Heart right ventricle (tissue), 16 donors: ENCODE measurements at regions of chr3 and their contacts with region 1.

Region 1: DNA sequence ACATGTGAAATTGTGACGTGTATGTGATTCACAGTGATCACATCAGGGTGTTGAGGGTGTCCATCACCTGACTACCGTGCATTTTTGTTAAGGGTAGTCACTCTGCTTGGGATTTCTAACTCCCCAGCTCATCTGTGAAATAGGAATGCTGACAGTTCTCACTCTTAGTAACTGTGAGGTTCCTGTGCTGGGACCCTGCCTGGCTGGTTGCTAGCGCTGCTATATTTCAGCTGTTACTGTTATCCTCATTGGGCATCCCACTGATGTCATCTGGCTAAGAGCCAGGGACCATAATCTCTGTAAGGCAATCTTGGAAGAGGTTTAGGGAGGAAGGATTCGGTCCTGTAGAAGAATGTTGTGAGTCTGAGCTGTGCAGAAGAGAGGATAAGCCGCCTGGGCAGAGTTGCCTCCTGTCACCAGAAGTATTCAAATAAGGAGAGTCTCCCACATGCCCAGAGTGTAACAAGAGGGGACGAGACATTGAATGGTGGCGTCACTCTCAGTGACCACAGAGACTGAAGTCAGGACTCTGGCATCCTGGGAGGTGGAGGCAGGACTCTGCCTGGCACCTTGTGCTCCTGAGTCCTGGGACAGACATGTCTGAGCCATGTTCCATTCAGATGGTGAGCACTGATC is 52.1 kb downstream of the FBLN2 start:
- DNase-seq: no peak
- ATAC-seq: peak in 4 of 8 donors; percentile 18 to 37 (median 31)
- H3K4me3 ChIP-seq: no peak overlapping the region
- H3K27ac ChIP-seq: no peak overlapping the region
- H3K4me1 ChIP-seq: peaks cover 0 to 27% (median 3%) of the 10 kb centered on the region in 9 donors
- H3K27me3 ChIP-seq: peaks cover 0 to 14% (median 0%) of the 10 kb centered on the region in 7 donors
- CTCF ChIP-seq: no peak

Region 2: GRCh38 chr3:13559764-13560525 is 41.1 kb before region 1 on chr3:
- intact Hi-C with region 1: loop called in 1 of 10 experiments (anchors 5 kb)
- DNase-seq: peak in 1 of 2 donors; percentile 50
- ATAC-seq: peak; percentile 58 to 81 (median 73)
- H3K4me3 ChIP-seq: no peak overlapping the region
- H3K27ac ChIP-seq: peak overlapping the region in 7 of 10 donors; percentile 30 to 78 (median 69)
- H3K4me1 ChIP-seq: peaks cover 1 to 83% (median 23%) of the 10 kb centered on the region in 9 donors
- H3K27me3 ChIP-seq: no peaks in the 10 kb centered on the region
- CTCF ChIP-seq: no peak

Region 3: DNA sequence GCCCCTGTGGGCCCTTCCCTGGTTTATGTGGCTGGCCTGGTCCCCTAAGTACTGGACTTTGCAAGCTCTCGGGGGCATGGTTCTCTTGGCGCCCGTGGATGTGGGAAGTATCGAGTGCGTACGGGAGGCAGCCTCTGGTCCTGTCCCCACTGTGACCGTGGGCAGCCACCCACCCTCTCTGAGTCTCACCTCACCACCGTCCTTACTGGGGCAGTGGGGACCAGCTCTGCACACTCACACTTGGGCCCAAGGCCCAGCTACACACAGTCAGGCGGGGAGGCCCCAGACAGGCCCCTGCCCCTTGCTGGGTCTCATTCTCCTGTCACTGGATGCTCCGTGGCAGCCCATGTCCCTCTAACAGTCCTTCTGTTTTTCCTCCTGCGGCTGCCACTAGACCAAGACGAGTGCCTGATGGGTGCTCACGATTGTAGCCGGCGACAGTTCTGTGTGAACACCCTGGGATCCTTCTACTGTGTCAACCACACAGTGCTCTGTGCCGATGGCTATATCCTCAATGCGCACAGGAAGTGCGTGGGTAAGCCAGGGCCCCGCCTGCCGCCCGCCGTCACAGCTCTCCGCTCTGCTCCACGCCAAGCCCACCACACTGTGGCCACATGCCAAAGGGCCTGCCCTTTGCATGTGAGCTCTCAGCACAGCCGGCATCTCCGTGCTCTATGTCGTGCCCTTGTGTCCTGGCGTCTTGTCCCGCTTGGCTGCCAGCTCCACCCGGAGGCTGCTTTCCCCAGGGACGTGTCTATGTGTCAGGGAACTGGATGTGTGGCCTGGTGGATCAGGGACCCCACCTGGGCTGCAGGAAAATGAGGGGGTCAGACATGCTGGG is 20.5 kb after region 1 on chr3:
- intact Hi-C with region 1: loop called in 1 of 10 experiments (anchors 1 kb)
- DNase-seq: no peak
- ATAC-seq: peak in 3 of 8 donors; percentile 10 to 21 (median 19)
- H3K4me3 ChIP-seq: no peak overlapping the region
- H3K27ac ChIP-seq: no peak overlapping the region
- H3K4me1 ChIP-seq: no peaks in the 10 kb centered on the region
- H3K27me3 ChIP-seq: no peaks in the 10 kb centered on the region
- CTCF ChIP-seq: no peak

Region 4: GRCh38 chr3:13644341-13645117 is 43.5 kb after region 1 on chr3:
- intact Hi-C with region 1: no loop called
- DNase-seq: no peak
- ATAC-seq: no peak
- H3K4me3 ChIP-seq: no peak overlapping the region
- H3K27ac ChIP-seq: no peak overlapping the region
- H3K4me1 ChIP-seq: peaks cover 0 to 12% (median 7%) of the 10 kb centered on the region in 9 donors
- H3K27me3 ChIP-seq: peaks cover 0 to 26% (median 15%) of the 10 kb centered on the region in 7 donors
- CTCF ChIP-seq: no peak